A673 (cell line): ENCODE measurements at regions of chr10 and their contacts with region 1.

Region 1: GRCh38 chr10:106226141-106226540 is 938.4 kb downstream of the SORCS1 start:
- DNase-seq: no peak
- H3K4me3 ChIP-seq: no peak overlapping the region
- H3K27ac ChIP-seq: no peak overlapping the region
- H3K4me1 ChIP-seq: no peaks in the 10 kb centered on the region
- H3K27me3 ChIP-seq: no peaks in the 10 kb centered on the region
- CTCF ChIP-seq: no peak

Region 2: DNA sequence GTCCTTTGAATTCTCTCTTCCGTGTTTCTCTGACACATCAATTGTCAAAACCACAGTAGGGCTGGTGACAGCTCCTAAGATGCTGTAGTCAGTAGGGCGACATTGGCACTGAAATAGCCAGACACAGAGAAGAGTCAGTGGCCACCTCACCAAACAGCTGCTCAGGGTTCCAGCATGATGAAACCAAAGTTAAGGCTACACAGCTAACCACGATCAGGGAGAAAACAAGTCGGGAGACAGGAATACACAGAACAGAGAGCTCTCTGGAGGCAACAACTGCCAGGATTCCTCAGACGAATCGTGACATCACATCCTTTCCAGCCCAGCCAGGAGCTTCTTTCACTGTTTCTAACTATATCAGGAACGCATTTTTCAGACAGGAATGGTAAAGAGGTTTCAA is 16.2 kb after region 1 on chr10:
- CTCF ChIA-PET with region 1: no interaction called
- POLR2A ChIA-PET with region 1: interaction called, 10 read pairs
- intact Hi-C with region 1: no loop called
- DNase-seq: no peak
- H3K4me3 ChIP-seq: no peak overlapping the region
- H3K27ac ChIP-seq: no peak overlapping the region
- H3K4me1 ChIP-seq: no peaks in the 10 kb centered on the region
- H3K27me3 ChIP-seq: no peaks in the 10 kb centered on the region
- CTCF ChIP-seq: no peak

Region 3: DNA sequence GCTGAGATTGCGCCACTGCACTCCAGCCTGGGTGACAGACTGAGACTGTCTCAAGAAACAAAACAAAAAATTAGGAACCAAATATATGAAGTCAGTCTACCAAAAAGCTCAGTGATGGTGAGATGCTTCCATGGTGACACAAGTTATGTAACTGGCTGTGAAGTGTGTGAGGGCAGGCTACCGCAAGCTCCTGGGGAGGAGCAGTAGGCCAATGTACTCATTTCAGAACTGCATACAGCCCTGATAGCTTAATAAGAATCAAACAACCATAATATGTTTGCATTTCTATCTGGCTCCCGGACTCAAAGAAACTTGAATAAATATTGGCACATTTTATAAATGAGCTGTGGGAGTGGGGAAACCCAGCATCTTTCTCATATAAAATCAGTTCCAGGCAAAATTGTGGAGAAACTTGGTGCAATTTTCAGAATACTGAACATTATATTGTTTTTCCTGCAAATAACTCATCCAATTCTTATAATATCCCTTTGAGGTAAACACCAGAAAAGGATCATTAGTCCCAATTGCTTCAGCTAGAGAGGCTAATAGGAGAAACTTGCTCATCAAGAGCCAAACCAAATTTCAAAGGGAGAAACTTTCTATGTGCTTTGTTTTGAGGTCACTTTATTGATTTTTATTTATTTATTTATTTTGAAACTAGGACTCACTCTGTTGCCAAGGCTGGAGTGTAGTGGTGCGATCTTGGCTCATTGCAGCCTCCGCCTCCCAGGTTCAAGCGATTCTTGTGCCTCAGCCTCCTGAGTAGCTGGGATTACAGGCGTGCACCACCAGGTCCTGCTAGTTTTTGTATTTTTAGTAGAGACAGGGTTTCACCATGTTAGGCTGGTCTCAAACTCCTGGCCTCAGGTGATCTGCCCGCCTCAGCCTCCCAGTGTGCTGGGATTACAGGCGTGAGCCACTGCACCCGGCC is 811.3 kb after region 1 on chr10:
- CTCF ChIA-PET with region 1: no interaction called
- POLR2A ChIA-PET with region 1: no interaction called
- intact Hi-C with region 1: no loop called
- DNase-seq: no peak
- H3K4me3 ChIP-seq: no peak overlapping the region
- H3K27ac ChIP-seq: no peak overlapping the region
- H3K4me1 ChIP-seq: peaks cover 11% of the 10 kb centered on the region
- H3K27me3 ChIP-seq: no peaks in the 10 kb centered on the region
- CTCF ChIP-seq: no peak